AG04449 (cell line): ENCODE measurements at regions of chr7 and their contacts with region 1.

Region 1: GRCh38 chr7:149310113-149310836 is 48.3 kb downstream of the ZNF783 start:
- DNase-seq: peak; percentile 64
- H3K4me3 ChIP-seq: no peak overlapping the region
- CTCF ChIP-seq: peak; percentile 43

Region 2: DNA sequence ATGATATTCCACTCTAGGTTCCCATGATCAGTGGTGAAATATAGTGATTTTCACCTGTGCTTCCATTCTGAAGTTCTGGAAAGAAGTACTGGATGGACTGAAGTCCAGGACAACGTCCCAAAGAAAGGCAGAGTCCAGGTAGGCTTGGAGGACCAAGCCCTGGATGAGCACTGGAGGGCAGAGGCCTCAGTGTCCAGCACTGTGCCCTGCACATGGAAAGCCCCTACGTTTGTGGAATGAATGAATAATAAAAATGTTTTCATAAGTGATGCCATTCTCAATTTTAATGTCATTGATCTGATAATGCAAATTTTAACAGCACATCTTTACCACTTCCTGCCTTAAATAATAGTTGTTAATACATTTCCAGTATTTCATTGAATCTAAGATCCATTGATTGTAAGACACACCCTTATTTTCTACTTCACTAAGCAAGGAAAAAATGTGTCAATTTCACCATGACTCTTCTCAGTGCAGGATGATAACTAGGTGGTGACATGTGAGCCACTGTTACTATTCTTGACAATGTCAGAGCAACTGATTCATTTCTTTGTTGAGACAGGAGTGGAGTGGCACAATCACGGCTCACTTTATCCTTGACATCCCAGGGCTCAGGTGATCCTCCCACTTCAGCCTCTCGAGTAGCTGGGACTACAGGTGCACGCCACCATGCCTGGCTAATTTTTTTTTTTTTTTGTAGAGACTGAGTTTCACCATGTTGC is 13.1 kb before region 1 on chr7:
- CTCF ChIA-PET with region 1: interaction called, 20 read pairs
- POLR2A ChIA-PET with region 1: no interaction called
- DNase-seq: no peak
- H3K4me3 ChIP-seq: no peak overlapping the region
- CTCF ChIP-seq: no peak

Region 3: GRCh38 chr7:149321978-149322541 is 11.8 kb after region 1 on chr7:
- CTCF ChIA-PET with region 1: interaction called, 30 read pairs
- POLR2A ChIA-PET with region 1: no interaction called
- DNase-seq: no peak
- H3K4me3 ChIP-seq: peak overlapping the region; percentile 21
- CTCF ChIP-seq: no peak

Region 4: GRCh38 chr7:149422129-149422913 is 112.0 kb after region 1 on chr7:
- CTCF ChIA-PET with region 1: interaction called, 10 read pairs
- POLR2A ChIA-PET with region 1: no interaction called
- DNase-seq: no peak
- H3K4me3 ChIP-seq: peak overlapping the region; percentile 44
- CTCF ChIP-seq: peak; percentile 62

Region 5: GRCh38 chr7:149624419-149625339 is 314.4 kb after region 1 on chr7:
- CTCF ChIA-PET with region 1: interaction called, 30 read pairs
- POLR2A ChIA-PET with region 1: no interaction called
- DNase-seq: peak; percentile 31
- H3K4me3 ChIP-seq: peak overlapping the region; percentile 91
- CTCF ChIP-seq: peak; percentile 92